B cell (primary cell): ENCODE measurements at regions of chr14 and their contacts with region 1.

Region 1: GRCh38 chr14:58199726-58200479 is at the start of gene ACTR10:
- DNase-seq: peak; percentile 95
- ATAC-seq: peak; percentile 89
- H3K4me3 ChIP-seq: peak within 1 kb of the TSS; percentile 71 to 88 (median 79)
- H3K4me3 Mint-ChIP-seq: peak within 1 kb of the TSS; percentile 95
- H3K27ac ChIP-seq: peak within 1 kb of the TSS; percentile 70 to 96
- H3K27ac Mint-ChIP-seq: peak within 1 kb of the TSS; percentile 96
- H3K4me1 ChIP-seq: peaks cover 15 to 17% of the 10 kb centered on the region in 2 donors
- H3K4me1 Mint-ChIP-seq: peaks cover 28% of the 10 kb centered on the region
- H3K27me3 ChIP-seq: peaks cover 0 to 3% (median 1%) of the 10 kb centered on the region in 4 experiments
- H3K27me3 Mint-ChIP-seq: no peaks in the 10 kb centered on the region
- CTCF ChIP-seq: no peak
- total RNA-seq, gene ACTR10: 34.1 and 40.6 TPM in 2 replicates

Region 2: GRCh38 chr14:58152014-58152857 is 47.7 kb before region 1 on chr14 and contains the start of gene ARMH4:
- CTCF ChIA-PET with region 1: no interaction called
- POLR2A ChIA-PET with region 1: no interaction called
- intact Hi-C with region 1: loop called (anchors 1 kb)
- DNase-seq: peak; percentile 74
- ATAC-seq: peak; percentile 98
- H3K4me3 ChIP-seq: peak within 1 kb of the TSS; percentile 41 to 65 (median 54)
- H3K4me3 Mint-ChIP-seq: peak within 1 kb of the TSS; percentile 86
- H3K27ac ChIP-seq: no peak within 1 kb of the TSS
- H3K27ac Mint-ChIP-seq: no peak within 1 kb of the TSS
- H3K4me1 ChIP-seq: peaks cover 14 to 17% of the 10 kb centered on the region in 2 donors
- H3K4me1 Mint-ChIP-seq: peaks cover 16% of the 10 kb centered on the region
- H3K27me3 ChIP-seq: peaks cover 0 to 33% (median 23%) of the 10 kb centered on the region in 4 experiments
- H3K27me3 Mint-ChIP-seq: peaks cover 50% of the 10 kb centered on the region
- CTCF ChIP-seq: no peak
- total RNA-seq, gene ARMH4: not detected in 2 replicates

Region 3: GRCh38 chr14:58189176-58189575 is 10.7 kb before region 1 on chr14:
- CTCF ChIA-PET with region 1: no interaction called
- POLR2A ChIA-PET with region 1: no interaction called
- intact Hi-C with region 1: no loop called
- DNase-seq: no peak
- ATAC-seq: no peak
- H3K4me3 ChIP-seq: no peak overlapping the region
- H3K4me3 Mint-ChIP-seq: no peak overlapping the region
- H3K27ac ChIP-seq: no peak overlapping the region
- H3K27ac Mint-ChIP-seq: no peak overlapping the region
- H3K4me1 ChIP-seq: no peaks in the 10 kb centered on the region
- H3K4me1 Mint-ChIP-seq: no peaks in the 10 kb centered on the region
- H3K27me3 ChIP-seq: peaks cover 0 to 3% (median 1%) of the 10 kb centered on the region in 4 experiments
- H3K27me3 Mint-ChIP-seq: peaks cover 38% of the 10 kb centered on the region
- CTCF ChIP-seq: no peak

Region 4: DNA sequence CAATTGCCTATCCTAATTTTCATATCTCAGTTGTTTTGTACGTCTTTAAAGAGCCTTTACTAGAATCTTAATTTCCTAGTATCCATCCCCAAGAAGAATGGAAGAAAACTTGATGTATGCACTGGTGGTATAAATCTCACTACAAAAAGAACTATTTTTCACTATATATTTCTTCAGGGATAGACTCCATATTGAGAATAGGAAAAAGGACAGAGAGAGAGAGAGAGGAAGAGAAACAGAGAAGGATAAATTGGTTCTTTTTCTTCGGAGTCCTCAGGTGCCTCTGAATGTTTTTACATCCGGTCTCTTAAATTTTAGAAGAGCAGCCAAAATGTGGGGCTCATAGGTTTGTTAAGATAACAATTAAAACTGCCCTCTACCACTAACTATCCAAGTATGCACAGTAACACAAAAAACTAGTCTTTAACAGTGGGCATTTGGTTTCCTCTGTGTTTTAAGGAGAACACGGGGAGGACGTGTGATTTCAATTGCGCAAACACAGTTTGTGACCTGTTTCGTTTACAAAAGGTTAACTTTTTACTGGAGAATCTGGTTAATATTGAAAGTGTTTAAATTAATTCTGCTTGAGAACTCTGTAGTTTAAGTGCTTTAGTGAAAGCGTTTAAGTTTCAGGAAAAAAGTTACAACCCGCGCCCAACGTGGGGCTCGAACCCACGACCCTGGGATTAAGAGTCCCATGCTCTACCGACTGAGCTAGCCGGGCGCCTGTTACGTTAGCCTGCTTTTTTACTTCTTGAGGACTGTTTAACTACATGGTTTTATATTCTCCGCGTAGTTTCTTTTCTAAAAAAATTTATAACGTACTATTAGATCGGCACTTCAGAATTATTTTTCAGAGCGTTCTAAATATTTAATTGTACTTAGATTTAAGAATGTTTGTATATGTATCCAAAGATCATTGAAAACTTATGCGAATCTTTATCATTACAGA is 39.6 kb after region 1 on chr14:
- CTCF ChIA-PET with region 1: interaction called, 4 read pairs
- POLR2A ChIA-PET with region 1: interaction called, 8 read pairs
- intact Hi-C with region 1: loop called (anchors 1 kb)
- DNase-seq: peak; percentile 90
- ATAC-seq: peak; percentile 19
- H3K4me3 ChIP-seq: peak overlapping the region; percentile 56 to 99 (median 92)
- H3K4me3 Mint-ChIP-seq: no peak overlapping the region
- H3K27ac ChIP-seq: peak overlapping the region; percentile 51 to 88
- H3K27ac Mint-ChIP-seq: no peak overlapping the region
- H3K4me1 ChIP-seq: peaks cover 3 to 15% of the 10 kb centered on the region in 2 donors
- H3K4me1 Mint-ChIP-seq: peaks cover 22% of the 10 kb centered on the region
- H3K27me3 ChIP-seq: no peaks in the 10 kb centered on the region
- H3K27me3 Mint-ChIP-seq: no peaks in the 10 kb centered on the region
- CTCF ChIP-seq: no peak

Region 5: GRCh38 chr14:58244556-58245387 is 44.9 kb after region 1 on chr14 and contains the start of gene PSMA3:
- CTCF ChIA-PET with region 1: no interaction called
- POLR2A ChIA-PET with region 1: interaction called, 8 read pairs
- intact Hi-C with region 1: loop called (anchors 1 kb)
- DNase-seq: peak; percentile 97
- ATAC-seq: peak; percentile 87
- H3K4me3 ChIP-seq: peak within 1 kb of the TSS; percentile 89 to 100 (median 97)
- H3K4me3 Mint-ChIP-seq: peak within 1 kb of the TSS; percentile 96
- H3K27ac ChIP-seq: peak within 1 kb of the TSS; percentile 90 to 92
- H3K27ac Mint-ChIP-seq: peak within 1 kb of the TSS; percentile 96
- H3K4me1 ChIP-seq: peaks cover 9 to 19% of the 10 kb centered on the region in 2 donors
- H3K4me1 Mint-ChIP-seq: peaks cover 44% of the 10 kb centered on the region
- H3K27me3 ChIP-seq: no peaks in the 10 kb centered on the region
- H3K27me3 Mint-ChIP-seq: no peaks in the 10 kb centered on the region
- CTCF ChIP-seq: no peak
- total RNA-seq, gene PSMA3: 98.1 and 99.2 TPM in 2 replicates

Region 6: GRCh38 chr14:59483900-59484638 is 1284.2 kb after region 1 on chr14 and contains the starts of genes JKAMP and L3HYPDH:
- CTCF ChIA-PET with region 1: no interaction called
- POLR2A ChIA-PET with region 1: no interaction called
- intact Hi-C with region 1: loop called (anchors 10 kb)
- DNase-seq: peak; percentile 96
- ATAC-seq: peak; percentile 92
- H3K4me3 ChIP-seq: peak within 1 kb of the TSS; percentile 83 to 97 (median 93)
- H3K4me3 Mint-ChIP-seq: peak within 1 kb of the TSS; percentile 96
- H3K27ac ChIP-seq: peak within 1 kb of the TSS; percentile 57 to 79
- H3K27ac Mint-ChIP-seq: peak within 1 kb of the TSS; percentile 90
- H3K4me1 ChIP-seq: peaks cover 36 to 40% of the 10 kb centered on the region in 2 donors
- H3K4me1 Mint-ChIP-seq: peaks cover 56% of the 10 kb centered on the region
- H3K27me3 ChIP-seq: no peaks in the 10 kb centered on the region
- H3K27me3 Mint-ChIP-seq: no peaks in the 10 kb centered on the region
- CTCF ChIP-seq: peak; percentile 70
- total RNA-seq, gene JKAMP: 25.7 and 30.3 TPM in 2 replicates
- total RNA-seq, gene L3HYPDH: 67.3 and 74.5 TPM in 2 replicates